ENCODE measurements at regions of chr1 and their contacts with region 1.

Region 1: GRCh38 chr1:209354111-209354839 is 229.2 kb upstream of the CAMK1G start:
- DNase-seq: peak; percentile 82
- H3K4me3 Mint-ChIP-seq: no peak overlapping the region
- H3K27ac Mint-ChIP-seq: no peak overlapping the region
- H3K4me1 Mint-ChIP-seq: peaks cover 7% of the 10 kb centered on the region
- H3K27me3 Mint-ChIP-seq: no peaks in the 10 kb centered on the region
- CTCF ChIP-seq: peak; percentile 84

Region 2: DNA sequence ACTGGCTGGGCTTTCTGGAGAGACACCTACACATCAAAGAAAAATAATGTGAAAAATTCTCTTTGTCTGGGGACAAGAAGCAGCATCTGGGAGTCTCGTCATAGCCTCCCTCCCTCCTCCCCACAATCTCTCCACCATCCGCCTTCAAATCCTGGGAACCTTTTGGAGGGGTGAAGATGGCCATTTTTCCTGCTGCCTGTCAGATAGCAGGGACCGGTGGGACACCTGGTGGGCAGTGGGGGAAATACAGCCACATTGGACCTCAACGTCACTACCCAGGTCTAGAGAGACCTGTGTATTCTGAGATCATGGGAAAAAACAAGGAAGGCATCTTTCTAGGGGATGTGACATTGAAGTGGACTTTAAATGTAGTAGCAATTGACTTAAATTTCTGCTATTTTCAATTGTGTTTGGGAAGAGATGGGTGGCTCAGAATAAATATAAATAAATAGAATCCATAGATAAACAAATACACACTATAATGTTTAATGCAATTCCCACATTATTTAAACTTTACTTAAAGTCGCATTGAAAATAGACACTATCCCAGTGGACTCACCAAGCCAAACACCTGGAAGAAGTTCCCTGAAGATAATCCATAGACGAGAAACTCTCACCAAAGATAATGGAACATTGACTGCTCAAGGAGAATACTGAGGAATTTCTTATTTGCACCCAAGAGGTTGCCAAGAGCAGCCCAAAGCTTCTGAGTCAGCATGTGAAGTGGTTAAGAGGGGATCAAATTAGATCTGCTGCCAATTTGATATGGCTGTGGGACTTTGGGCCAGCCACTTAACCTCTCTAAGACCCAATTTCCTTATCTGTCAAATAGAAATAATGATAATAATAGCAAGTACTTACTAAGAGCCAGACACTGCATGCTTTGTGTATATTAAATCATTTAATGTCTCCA is 81.6 kb after region 1 on chr1:
- CTCF ChIA-PET with region 1: interaction called, 3 read pairs
- intact Hi-C with region 1: loop called (anchors 2 kb)
- DNase-seq: peak; percentile 94
- H3K4me3 Mint-ChIP-seq: no peak overlapping the region
- H3K27ac Mint-ChIP-seq: no peak overlapping the region
- H3K4me1 Mint-ChIP-seq: peaks cover 20% of the 10 kb centered on the region
- H3K27me3 Mint-ChIP-seq: peaks cover 17% of the 10 kb centered on the region
- CTCF ChIP-seq: peak; percentile 92

Region 3: GRCh38 chr1:209720326-209720725 is 366.1 kb after region 1 on chr1:
- CTCF ChIA-PET with region 1: no interaction called
- intact Hi-C with region 1: no loop called
- DNase-seq: no peak
- H3K4me3 Mint-ChIP-seq: no peak overlapping the region
- H3K27ac Mint-ChIP-seq: no peak overlapping the region
- H3K4me1 Mint-ChIP-seq: peaks cover 5% of the 10 kb centered on the region
- H3K27me3 Mint-ChIP-seq: peaks cover 13% of the 10 kb centered on the region
- CTCF ChIP-seq: no peak